ENCODE measurements at regions of chr7 and their contacts with region 1.

Region 1: GRCh38 chr7:151244196-151244840 is 4.2 kb downstream of the SMARCD3 start:
- DNase-seq: peak in 1 of 5 donors; percentile 35
- ATAC-seq: no peak
- H3K4me3 ChIP-seq: peak overlapping the region in 1 of 12 donors; percentile 80
- H3K27ac ChIP-seq: no peak overlapping the region
- H3K4me1 ChIP-seq: peaks cover 4 to 75% (median 45%) of the 10 kb centered on the region in 12 donors
- H3K27me3 ChIP-seq: peaks cover 0 to 39% (median 7%) of the 10 kb centered on the region in 9 donors
- CTCF ChIP-seq: peak; percentile 75 to 90 (median 83)
- POLR2A ChIP-seq: no peak

Region 2: DNA sequence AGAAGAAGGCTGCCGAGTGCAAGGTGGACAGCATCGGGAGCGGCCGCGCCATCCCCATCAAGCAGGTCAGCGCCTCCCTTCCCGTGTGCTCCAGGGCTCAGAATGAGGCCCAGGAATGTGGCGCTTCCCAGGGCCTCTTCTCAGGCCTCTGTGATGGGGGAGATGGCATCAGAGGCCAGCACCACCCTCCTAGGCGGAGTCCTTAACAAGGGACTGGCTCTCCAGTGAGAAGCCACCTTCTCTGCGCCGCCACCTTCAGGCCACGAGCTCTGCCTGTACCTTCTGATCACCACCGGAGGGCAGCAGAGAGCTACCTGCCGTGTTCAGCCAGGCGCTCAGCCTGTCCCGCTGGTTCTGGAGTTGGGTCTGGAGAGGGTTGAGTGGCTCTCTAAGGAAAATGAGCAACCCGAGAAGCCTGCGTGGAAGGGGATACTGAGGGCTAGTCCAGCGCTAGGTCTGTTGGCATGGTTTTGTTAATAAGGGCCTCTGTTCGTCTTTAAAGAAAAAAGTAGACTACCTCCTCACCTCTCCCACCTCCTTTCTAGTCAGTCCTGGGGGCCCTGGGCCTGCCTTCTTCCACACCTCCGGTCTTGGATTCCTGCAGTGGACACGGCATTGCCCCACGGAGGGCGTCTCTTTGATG is 120.4 kb before region 1 on chr7:
- intact Hi-C with region 1: loop called in 9 of 10 experiments (anchors 5 to 10 kb)
- DNase-seq: peak; percentile 83 to 90 (median 85)
- ATAC-seq: peak; percentile 57 to 79 (median 74)
- H3K4me3 ChIP-seq: no peak overlapping the region
- H3K27ac ChIP-seq: no peak overlapping the region
- H3K4me1 ChIP-seq: peaks cover 0 to 32% (median 9%) of the 10 kb centered on the region in 12 donors
- H3K27me3 ChIP-seq: no peaks in the 10 kb centered on the region
- CTCF ChIP-seq: peak; percentile 96 to 99 (median 98)
- POLR2A ChIP-seq: no peak

Region 3: DNA sequence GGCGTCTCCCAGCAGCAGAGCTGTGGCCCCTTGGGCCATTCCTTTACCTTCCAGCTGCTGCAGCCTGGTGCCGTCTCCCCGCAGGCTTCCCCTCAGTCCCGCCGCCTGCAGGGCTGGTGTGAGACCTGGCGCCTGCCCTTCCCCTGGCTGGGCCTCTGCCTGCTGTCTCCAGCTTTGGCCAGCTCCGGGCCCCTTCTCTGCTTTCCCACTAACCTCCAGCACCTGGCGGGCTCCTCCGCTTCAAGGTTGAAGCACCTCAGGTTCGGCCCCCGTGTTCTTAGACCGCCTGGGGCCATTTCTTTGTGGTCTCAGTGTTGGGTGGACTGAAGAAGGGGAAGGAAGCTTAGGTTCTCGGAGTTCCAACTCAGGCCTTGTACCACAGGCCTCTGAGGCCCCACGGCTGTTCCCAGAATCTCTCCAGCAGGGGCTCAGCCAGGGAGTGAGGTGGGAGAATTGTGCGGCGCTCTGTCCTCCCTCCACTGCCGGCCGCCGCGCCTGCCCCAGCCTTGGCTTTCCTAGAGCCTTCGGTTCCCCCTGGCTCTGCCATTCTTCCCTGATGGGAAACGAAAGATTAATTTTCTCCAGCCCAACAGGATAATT is 107.1 kb before region 1 on chr7:
- intact Hi-C with region 1: loop called in 1 of 10 experiments (anchors 5 kb)
- DNase-seq: peak in 2 of 5 donors; percentile 20 to 69
- ATAC-seq: peak in 3 of 4 donors; percentile 6 to 58 (median 42)
- H3K4me3 ChIP-seq: no peak overlapping the region
- H3K27ac ChIP-seq: peak overlapping the region in 7 of 12 donors; percentile 12 to 66 (median 25)
- H3K4me1 ChIP-seq: peaks cover 0 to 34% (median 8%) of the 10 kb centered on the region in 12 donors
- H3K27me3 ChIP-seq: no peaks in the 10 kb centered on the region
- CTCF ChIP-seq: no peak
- POLR2A ChIP-seq: no peak

Region 4: GRCh38 chr7:151304856-151305255 is 60.5 kb after region 1 on chr7:
- intact Hi-C with region 1: loop called in 9 of 10 experiments (anchors 1 to 5 kb)
- DNase-seq: no peak
- ATAC-seq: no peak
- H3K4me3 ChIP-seq: peak overlapping the region in 2 of 12 donors; percentile 19 to 21
- H3K27ac ChIP-seq: no peak overlapping the region
- H3K4me1 ChIP-seq: peaks cover 0 to 12% (median 4%) of the 10 kb centered on the region in 12 donors
- H3K27me3 ChIP-seq: peaks cover 0 to 39% (median 13%) of the 10 kb centered on the region in 9 donors
- CTCF ChIP-seq: no peak
- POLR2A ChIP-seq: no peak